Activated naive CD4-positive, alpha-beta T cell treated with anti-CD3 and anti-CD28 coated beads for 36 hours (primary cell): ENCODE measurements at regions of chr15 and their contacts with region 1.

Region 1: GRCh38 chr15:42273102-42273899 is at the starts of genes GANC and TMEM87A:
- DNase-seq: peak; percentile 98
- H3K4me3 Mint-ChIP-seq: peak within 1 kb of the TSS; percentile 99
- H3K27ac Mint-ChIP-seq: peak within 1 kb of the TSS; percentile 99
- H3K4me1 Mint-ChIP-seq: peaks cover 45% of the 10 kb centered on the region
- H3K27me3 Mint-ChIP-seq: no peaks in the 10 kb centered on the region
- total RNA-seq, gene GANC: 27.4 to 27.7 TPM
- total RNA-seq, gene TMEM87A: 26.6 to 28.4 TPM

Region 2: DNA sequence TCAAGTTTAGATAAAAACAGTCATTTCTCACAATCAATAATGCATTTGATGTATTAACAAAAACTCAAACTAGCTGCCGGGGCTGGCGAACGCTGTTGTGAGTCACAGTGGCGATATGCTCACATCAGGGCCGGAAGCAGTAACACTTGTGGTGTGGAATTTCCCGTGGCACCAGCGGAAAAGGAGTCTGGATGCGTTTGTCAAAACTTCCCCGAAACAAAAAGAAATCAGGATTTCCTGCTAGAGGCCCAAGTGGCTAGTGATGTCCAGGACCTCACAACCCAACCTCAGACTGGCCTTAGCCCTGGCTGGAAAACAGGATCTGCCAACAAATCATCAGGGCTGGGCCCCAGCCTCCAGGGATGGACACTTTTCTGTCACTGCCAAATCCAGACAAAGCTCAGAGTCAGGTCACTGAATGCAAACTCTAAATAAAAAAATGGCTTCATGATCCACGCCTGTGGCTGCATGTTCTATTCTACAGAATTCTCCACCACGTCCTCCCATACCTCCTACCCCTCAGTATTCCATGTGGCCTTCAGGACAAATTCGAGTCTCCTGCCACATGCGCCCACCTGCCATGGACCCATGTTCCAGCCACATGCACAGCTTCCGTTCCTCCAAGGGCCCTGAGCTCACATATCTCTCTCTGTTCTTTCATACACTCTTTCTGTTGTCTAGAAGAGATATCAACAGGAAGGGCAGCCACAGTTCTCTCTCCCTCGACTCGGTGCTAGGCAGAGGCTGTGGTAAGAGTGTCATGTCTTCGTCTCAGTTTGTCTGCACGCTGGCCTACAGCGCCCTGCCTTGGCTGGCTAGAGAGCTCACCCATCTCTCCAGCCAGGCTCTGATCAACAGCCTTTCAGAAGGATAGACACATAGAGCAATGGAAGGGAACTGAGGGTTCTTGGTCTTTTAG is 336.4 kb before region 1 on chr15:
- CTCF ChIA-PET with region 1: no interaction called
- intact Hi-C with region 1: loop called (anchors 2 kb)
- DNase-seq: peak; percentile 95
- H3K4me3 Mint-ChIP-seq: peak overlapping the region; percentile 68
- H3K27ac Mint-ChIP-seq: peak overlapping the region; percentile 100
- H3K4me1 Mint-ChIP-seq: peaks cover 71% of the 10 kb centered on the region
- H3K27me3 Mint-ChIP-seq: no peaks in the 10 kb centered on the region

Region 3: GRCh38 chr15:42194502-42194901 is 78.8 kb before region 1 on chr15:
- CTCF ChIA-PET with region 1: no interaction called
- intact Hi-C with region 1: loop called (anchors 1 kb)
- DNase-seq: peak; percentile 71
- H3K4me3 Mint-ChIP-seq: no peak overlapping the region
- H3K27ac Mint-ChIP-seq: peak overlapping the region; percentile 94
- H3K4me1 Mint-ChIP-seq: peaks cover 63% of the 10 kb centered on the region
- H3K27me3 Mint-ChIP-seq: no peaks in the 10 kb centered on the region

Region 4: GRCh38 chr15:42215913-42216829 is 57.1 kb before region 1 on chr15:
- CTCF ChIA-PET with region 1: no interaction called
- intact Hi-C with region 1: no loop called
- DNase-seq: no peak
- H3K4me3 Mint-ChIP-seq: no peak overlapping the region
- H3K27ac Mint-ChIP-seq: peak overlapping the region; percentile 59
- H3K4me1 Mint-ChIP-seq: peaks cover 30% of the 10 kb centered on the region
- H3K27me3 Mint-ChIP-seq: no peaks in the 10 kb centered on the region

Region 5: DNA sequence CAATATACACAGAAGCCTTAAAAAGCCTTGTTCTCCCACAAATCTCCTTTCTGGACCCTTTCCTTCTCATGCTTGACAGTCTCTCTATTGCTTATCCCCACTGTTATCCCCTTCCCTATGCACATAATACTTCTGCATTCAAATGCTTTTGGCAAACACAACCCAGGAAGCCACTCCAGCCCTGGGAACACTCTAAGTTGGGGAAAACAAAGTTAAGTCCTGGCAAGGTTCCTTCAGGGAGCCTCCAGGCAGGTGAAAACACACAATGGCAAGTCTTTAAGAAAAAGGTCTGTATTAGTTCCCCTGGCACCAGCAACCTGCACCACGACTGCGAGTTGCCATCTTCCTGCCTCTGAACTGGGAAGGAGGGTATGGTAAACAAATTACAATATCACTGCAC is 20.0 kb before region 1 on chr15:
- CTCF ChIA-PET with region 1: no interaction called
- intact Hi-C with region 1: no loop called
- DNase-seq: no peak
- H3K4me3 Mint-ChIP-seq: no peak overlapping the region
- H3K27ac Mint-ChIP-seq: no peak overlapping the region
- H3K4me1 Mint-ChIP-seq: no peaks in the 10 kb centered on the region
- H3K27me3 Mint-ChIP-seq: no peaks in the 10 kb centered on the region

Region 6: DNA sequence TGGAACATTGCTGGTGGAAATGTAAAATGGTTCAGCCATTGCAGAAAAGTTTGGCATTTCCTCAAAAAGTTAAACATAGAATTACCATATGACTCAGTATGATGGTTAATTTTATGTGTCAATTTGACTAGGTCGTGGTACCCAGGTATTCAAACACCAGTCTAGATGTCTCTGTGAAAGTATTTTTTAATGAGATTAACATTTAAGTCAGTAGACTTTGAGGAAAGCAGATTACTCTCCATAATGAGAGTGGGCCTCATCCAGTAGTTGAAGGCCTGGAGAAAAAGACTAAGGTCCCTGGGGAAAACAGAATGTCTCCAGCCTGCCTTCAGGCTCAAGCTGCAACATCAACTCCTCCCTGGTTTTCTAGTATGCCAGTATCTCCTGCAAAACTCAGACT is 42.2 kb after region 1 on chr15:
- CTCF ChIA-PET with region 1: no interaction called
- intact Hi-C with region 1: loop called (anchors 1 kb)
- DNase-seq: no peak
- H3K4me3 Mint-ChIP-seq: no peak overlapping the region
- H3K27ac Mint-ChIP-seq: no peak overlapping the region
- H3K4me1 Mint-ChIP-seq: no peaks in the 10 kb centered on the region
- H3K27me3 Mint-ChIP-seq: no peaks in the 10 kb centered on the region

Region 7: GRCh38 chr15:42495361-42496212 is 222.3 kb after region 1 on chr15 and contains the start of gene SNAP23:
- CTCF ChIA-PET with region 1: no interaction called
- intact Hi-C with region 1: loop called (anchors 1 kb)
- DNase-seq: peak; percentile 87
- H3K4me3 Mint-ChIP-seq: peak within 1 kb of the TSS; percentile 99
- H3K27ac Mint-ChIP-seq: peak within 1 kb of the TSS; percentile 94
- H3K4me1 Mint-ChIP-seq: peaks cover 65% of the 10 kb centered on the region
- H3K27me3 Mint-ChIP-seq: no peaks in the 10 kb centered on the region
- total RNA-seq, gene SNAP23: 33.1 to 34.5 TPM

Region 8: DNA sequence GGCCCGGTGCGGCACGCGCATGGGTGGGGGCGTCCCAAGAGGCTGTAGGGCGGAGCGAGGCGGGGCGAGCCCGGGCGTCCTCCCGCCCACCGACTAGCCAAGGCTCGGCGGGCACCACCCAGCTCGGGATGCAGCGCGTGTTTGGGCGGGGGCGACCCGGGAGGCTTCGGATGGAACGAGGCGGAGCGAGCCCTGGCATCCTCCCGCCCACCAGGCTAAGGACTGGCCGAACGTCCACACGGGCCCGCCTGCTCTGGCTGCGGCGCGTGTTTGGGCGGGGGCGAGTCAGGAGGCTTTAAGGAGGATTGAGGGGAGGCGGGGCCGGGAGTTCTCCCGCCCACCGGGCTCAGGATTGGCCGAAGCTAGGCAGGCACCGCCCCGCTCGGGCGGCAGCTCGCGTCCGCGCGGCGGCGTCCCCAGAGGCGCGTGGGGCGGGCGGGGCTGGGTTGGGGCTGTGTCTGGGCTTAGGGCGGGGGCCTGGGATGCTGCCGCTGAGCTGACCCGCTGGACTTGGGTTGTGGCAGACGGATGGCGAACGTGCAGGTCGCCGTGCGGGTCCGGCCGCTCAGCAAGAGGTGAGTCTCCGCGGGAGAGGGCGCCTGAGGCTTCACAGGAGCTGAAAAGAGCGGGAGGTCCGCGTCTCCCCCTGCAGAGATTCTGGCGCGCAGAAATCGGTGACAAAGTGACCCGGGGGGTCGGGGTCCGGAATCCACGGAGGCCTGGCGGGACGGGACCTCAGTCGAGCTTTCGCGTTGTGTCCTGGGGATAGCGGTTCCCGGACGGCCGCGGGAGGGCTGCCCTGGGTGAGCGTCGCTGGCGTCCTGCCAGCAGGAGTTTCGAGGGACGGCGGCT is 302.1 kb after region 1 on chr15 and contains the start of gene STARD9:
- CTCF ChIA-PET with region 1: no interaction called
- intact Hi-C with region 1: loop called (anchors 10 kb)
- DNase-seq: peak; percentile 95
- H3K4me3 Mint-ChIP-seq: peak within 1 kb of the TSS; percentile 86
- H3K27ac Mint-ChIP-seq: no peak within 1 kb of the TSS
- H3K4me1 Mint-ChIP-seq: peaks cover 14% of the 10 kb centered on the region
- H3K27me3 Mint-ChIP-seq: peaks cover 28% of the 10 kb centered on the region
- total RNA-seq, gene STARD9: 1.9 to 2.5 TPM

Region 9: DNA sequence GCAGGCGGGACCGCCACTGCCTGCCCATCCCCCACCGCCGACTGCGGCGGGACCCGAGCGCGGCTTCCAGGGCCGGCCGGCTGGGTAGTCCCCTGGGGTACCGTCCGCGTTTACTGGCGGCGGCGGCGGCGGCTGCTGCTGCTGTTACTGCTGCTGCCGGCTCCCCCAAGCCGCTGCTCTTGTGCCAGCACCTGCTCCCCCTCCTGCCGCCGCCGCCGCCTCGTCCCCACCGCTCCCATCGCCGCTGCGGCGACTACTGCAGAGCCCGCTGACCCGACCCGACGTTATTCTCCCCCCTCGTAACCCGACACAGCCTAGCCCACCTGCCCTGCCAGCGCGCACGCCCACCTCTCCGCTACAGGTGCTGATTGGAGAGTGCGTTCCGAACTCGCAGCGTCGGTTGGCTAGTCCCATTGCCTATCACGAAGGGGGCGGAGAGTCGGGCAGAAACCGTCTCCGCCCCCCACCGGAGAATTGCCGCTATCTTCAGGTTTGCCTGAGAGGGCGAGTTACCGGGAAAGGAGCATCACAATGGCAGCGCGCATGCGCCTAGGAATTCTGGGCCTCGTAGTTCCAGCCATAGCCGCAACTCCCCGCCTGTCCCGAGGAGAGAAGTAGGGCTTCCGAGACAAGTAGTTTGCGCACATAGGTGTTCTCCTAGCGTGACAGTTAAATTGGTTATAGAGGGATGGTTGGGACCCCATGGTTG is 647.4 kb after region 1 on chr15 and contains the start of gene TTBK2:
- CTCF ChIA-PET with region 1: no interaction called
- intact Hi-C with region 1: loop called (anchors 1 kb)
- DNase-seq: peak; percentile 98
- H3K4me3 Mint-ChIP-seq: peak within 1 kb of the TSS; percentile 99
- H3K27ac Mint-ChIP-seq: peak within 1 kb of the TSS; percentile 92
- H3K4me1 Mint-ChIP-seq: peaks cover 22% of the 10 kb centered on the region
- H3K27me3 Mint-ChIP-seq: no peaks in the 10 kb centered on the region
- total RNA-seq, gene TTBK2: 13.5 to 15.7 TPM

Region 10: DNA sequence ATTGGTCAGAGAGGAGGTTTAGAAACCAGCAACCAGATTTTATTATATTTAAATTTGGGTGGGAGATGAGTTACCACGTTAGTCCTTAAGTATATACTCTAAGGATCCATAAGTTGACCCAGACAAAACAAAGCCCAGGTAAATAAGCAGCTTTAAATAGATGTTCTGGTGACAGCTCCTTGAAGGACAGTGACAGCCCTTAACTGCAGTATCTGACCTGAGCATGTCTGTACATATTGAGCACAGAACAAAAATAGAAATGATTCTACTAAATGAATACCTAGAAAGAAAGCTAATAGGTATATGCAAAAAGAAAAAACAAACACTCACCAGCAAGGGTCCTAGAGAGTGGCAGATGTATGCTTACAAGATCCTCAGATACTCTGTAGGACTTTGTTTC is 769.6 kb after region 1 on chr15:
- CTCF ChIA-PET with region 1: no interaction called
- intact Hi-C with region 1: no loop called
- DNase-seq: no peak
- H3K4me3 Mint-ChIP-seq: no peak overlapping the region
- H3K27ac Mint-ChIP-seq: no peak overlapping the region
- H3K4me1 Mint-ChIP-seq: no peaks in the 10 kb centered on the region
- H3K27me3 Mint-ChIP-seq: no peaks in the 10 kb centered on the region